ENCODE measurements at regions of chr19 and their contacts with region 1.

Region 1: DNA sequence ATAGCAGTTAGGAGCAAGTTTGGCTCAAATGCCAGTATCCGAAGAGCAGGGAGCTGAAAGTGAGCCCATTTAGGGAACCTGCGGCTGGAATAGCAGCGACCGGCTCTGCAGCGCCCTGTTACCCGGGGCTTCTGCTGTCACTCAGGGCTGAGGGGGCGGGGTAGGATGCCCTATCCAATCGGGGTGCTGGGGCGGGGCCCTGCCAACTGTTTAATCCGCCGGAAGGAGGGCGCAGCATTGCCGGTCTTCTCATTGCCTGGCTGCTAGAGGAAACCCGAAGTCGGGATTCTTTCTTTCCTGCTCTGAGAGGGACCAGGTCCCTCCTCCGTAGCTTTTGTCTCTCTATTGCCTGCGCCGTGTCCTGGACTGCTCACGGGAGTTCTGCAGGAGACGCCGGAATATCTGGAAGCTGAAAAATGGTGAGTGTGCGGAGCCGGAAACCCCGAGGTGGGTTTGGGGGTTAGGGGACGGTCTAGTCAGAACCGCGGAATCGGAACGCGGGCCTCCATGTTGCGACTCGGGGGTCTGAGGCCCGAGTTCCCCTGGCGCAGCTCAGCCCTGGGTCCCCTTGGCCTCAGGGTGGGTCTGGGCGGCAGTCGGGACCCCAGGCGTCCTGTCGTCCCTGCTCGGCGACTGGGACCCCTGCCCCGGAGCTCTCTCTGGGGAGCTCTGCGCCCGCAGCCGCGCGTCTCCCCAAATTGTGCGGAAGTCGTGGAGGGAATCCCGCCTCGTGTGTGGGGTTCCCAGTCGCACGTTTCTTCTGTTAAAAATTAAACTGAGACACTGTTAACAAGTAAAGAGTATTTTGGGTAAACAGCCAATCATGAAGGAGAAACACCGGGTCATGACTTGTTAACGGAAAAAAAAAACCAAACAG is 22.8 kb downstream of the ZNF763 start:
- DNase-seq: peak; percentile 97
- H3K4me3 Mint-ChIP-seq: peak overlapping the region; percentile 92
- H3K27ac Mint-ChIP-seq: peak overlapping the region; percentile 92
- H3K4me1 Mint-ChIP-seq: peaks cover 22% of the 10 kb centered on the region
- H3K27me3 Mint-ChIP-seq: no peaks in the 10 kb centered on the region

Region 2: GRCh38 chr19:11663181-11663591 is 324.5 kb before region 1 on chr19:
- CTCF ChIA-PET with region 1: no interaction called
- intact Hi-C with region 1: no loop called
- DNase-seq: no peak
- H3K4me3 Mint-ChIP-seq: no peak overlapping the region
- H3K27ac Mint-ChIP-seq: no peak overlapping the region
- H3K4me1 Mint-ChIP-seq: no peaks in the 10 kb centered on the region
- H3K27me3 Mint-ChIP-seq: no peaks in the 10 kb centered on the region

Region 3: DNA sequence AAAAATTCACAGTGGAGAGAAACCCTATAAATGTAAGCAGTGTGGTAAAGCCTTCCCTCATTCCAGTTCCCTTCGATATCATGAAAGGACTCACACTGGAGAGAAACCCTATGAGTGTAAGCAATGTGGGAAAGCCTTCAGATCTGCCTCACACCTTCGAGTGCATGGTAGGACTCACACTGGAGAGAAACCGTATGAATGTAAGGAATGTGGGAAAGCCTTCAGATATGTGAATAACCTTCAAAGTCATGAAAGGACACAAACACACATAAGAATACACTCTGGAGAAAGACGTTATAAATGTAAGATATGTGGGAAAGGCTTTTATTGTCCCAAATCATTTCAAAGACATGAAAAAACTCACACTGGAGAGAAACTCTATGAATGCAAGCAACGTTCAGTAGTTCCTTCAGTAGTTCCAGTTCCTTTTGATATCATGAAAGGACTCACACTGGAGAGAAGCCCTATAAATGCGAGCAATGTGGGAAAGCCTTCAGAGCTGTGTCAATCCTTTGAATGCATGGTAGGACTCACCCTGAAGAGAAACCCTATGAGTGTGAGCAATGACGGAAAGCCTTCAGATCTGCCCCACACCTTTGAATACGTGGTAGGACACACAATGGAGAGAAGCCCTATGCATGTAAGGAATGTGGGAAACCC is 155.3 kb before region 1 on chr19:
- CTCF ChIA-PET with region 1: no interaction called
- intact Hi-C with region 1: no loop called
- DNase-seq: no peak
- H3K4me3 Mint-ChIP-seq: no peak overlapping the region
- H3K27ac Mint-ChIP-seq: no peak overlapping the region
- H3K4me1 Mint-ChIP-seq: no peaks in the 10 kb centered on the region
- H3K27me3 Mint-ChIP-seq: no peaks in the 10 kb centered on the region

Region 4: DNA sequence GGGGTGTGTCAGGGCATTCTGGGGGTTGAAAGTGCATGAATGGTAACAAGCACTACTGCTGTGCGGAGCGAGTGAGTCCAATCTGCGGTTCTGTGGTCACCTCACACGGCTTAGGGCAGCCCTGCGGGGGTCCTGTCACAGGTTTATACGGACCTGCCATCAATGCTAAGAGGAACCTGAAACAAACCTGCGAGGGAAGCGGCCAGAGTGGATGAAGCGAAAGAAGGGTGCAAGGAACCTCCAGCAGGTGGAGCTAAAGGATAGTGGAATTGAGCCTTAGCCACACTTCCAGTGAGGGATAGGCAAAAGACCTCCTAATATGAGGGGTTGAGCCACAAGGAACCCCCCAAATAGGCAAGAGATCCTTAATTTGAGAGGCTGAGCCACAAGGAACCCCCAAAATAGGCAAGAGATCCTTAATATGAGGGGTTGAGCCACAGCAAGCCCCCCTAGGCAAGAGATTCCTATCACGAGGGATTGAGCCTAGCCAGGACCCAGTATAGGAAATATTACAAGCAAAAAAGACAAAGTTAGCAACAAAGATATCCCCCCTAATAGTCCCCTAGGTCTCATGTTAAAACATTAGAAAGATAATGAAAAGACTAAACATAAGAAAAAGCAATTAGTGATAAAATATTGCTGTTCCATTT is 106.4 kb before region 1 on chr19:
- CTCF ChIA-PET with region 1: interaction called, 6 read pairs
- intact Hi-C with region 1: loop called (anchors 2 kb)
- DNase-seq: peak; percentile 78
- H3K4me3 Mint-ChIP-seq: no peak overlapping the region
- H3K27ac Mint-ChIP-seq: no peak overlapping the region
- H3K4me1 Mint-ChIP-seq: no peaks in the 10 kb centered on the region
- H3K27me3 Mint-ChIP-seq: no peaks in the 10 kb centered on the region

Region 5: GRCh38 chr19:11971041-11971440 is 16.6 kb before region 1 on chr19:
- CTCF ChIA-PET with region 1: no interaction called
- intact Hi-C with region 1: no loop called
- DNase-seq: no peak
- H3K4me3 Mint-ChIP-seq: no peak overlapping the region
- H3K27ac Mint-ChIP-seq: no peak overlapping the region
- H3K4me1 Mint-ChIP-seq: peaks cover 1% of the 10 kb centered on the region
- H3K27me3 Mint-ChIP-seq: no peaks in the 10 kb centered on the region

Region 6: GRCh38 chr19:12000152-12000981 is 12.7 kb after region 1 on chr19:
- CTCF ChIA-PET with region 1: interaction called, 17 read pairs
- intact Hi-C with region 1: loop called (anchors 1 kb)
- DNase-seq: peak; percentile 70
- H3K4me3 Mint-ChIP-seq: no peak overlapping the region
- H3K27ac Mint-ChIP-seq: peak overlapping the region; percentile 78
- H3K4me1 Mint-ChIP-seq: peaks cover 19% of the 10 kb centered on the region
- H3K27me3 Mint-ChIP-seq: no peaks in the 10 kb centered on the region

Region 7: DNA sequence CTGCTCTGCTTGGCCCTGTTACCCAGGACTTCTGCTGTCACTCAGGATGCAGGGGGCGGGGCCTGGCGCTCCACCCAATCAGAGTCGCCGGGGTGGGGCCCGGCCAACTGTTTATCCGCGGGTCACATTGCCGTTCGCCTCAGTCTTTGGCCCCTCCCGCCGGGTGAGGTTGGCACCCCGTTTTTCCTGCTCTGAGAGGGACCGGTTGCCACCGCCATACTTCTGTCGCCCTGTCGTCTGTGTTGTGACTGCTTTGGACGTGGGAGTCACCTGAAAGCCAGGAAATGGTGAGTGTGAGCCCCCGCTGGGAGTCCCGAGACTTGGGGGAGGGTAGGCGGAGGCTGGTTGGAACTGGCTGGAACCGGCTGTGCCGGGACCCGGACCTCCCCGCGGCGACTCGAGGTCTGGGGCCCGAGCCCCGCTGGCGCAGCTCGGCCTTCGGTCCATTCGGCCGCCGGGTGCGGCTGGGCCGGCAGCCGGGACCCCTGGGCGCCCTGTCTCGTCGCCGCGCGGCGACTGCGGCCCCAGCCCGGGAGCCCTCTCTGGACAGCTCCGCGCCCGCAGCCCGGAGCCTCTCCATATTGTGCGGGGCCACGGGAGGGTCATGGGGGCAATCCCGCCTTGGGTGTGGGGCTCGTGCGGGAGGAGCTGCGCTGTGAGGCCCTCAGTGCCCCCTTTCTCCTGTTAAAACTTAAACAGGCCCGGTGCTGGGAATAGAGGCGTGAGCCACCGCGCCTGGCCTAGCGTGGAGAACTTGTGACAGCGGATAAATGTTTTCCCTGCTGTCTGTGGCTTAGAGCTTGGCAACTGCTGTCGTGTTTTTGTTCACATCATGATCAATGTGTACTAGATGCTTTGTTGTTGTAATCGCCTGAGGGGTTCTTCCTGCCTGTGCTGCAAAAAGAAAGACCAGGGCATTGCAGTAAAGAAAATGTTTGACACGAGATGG is 77.2 kb after region 1 on chr19 and contains the start of gene ZNF844:
- CTCF ChIA-PET with region 1: interaction called, 13 read pairs
- intact Hi-C with region 1: no loop called
- DNase-seq: peak; percentile 85
- H3K4me3 Mint-ChIP-seq: peak within 1 kb of the TSS; percentile 80
- H3K27ac Mint-ChIP-seq: no peak within 1 kb of the TSS
- H3K4me1 Mint-ChIP-seq: peaks cover 6% of the 10 kb centered on the region
- H3K27me3 Mint-ChIP-seq: no peaks in the 10 kb centered on the region
- total RNA-seq, gene ZNF844: 1.6 TPM

Region 8: DNA sequence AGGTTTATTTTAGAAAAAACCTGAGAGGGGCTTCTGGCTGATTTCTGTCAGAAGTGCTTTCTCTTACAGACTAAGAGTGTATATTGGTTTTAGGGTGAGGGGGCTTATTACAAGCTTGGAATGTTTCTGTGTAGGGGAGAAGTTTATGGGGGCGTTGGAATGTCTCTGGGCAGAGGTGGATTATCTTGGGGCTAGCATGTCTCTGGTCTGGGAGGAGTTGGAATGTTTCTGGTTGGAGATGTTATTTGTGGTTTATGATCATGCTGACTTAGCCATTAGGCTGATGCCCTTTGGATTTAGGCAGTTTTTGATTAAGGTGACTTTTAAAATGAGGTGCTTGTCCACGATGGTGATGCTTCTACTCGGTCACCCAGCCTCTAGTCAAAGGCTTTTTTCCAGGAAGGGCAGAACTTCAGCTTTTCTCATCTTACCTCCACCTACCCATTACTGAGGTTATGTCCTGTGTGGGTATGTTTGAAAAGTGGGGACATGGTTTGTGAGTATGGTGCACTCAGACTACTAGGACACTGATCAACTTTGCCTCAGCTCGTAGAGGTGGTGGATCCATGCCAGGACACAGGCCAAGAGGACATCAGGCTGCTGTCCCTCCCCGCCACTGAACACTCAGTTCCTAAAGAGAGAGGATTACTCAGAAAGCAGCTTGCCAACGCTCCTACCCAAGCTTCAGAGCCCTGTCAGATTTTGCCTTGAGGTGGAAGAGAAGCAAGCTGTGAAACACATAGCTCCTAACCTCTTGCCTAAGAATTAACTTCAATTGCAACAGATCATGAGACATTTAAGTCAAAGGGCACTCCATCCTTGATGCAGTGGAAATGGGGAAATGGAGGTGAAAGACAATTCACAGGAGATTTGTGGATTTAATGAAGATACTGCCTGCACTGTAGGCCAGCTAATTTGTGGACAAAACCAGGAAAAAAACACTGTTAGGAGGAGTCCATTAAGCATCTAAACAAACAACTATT is 243.4 kb after region 1 on chr19:
- CTCF ChIA-PET with region 1: no interaction called
- intact Hi-C with region 1: no loop called
- DNase-seq: no peak
- H3K4me3 Mint-ChIP-seq: no peak overlapping the region
- H3K27ac Mint-ChIP-seq: no peak overlapping the region
- H3K4me1 Mint-ChIP-seq: no peaks in the 10 kb centered on the region
- H3K27me3 Mint-ChIP-seq: no peaks in the 10 kb centered on the region

Region 9: GRCh38 chr19:12610540-12611360 is 623.1 kb after region 1 on chr19 and contains the starts of genes ZNF490 and ZNF791:
- CTCF ChIA-PET with region 1: no interaction called
- intact Hi-C with region 1: loop called (anchors 5 kb)
- DNase-seq: peak; percentile 99
- H3K4me3 Mint-ChIP-seq: peak within 1 kb of the TSS; percentile 100
- H3K27ac Mint-ChIP-seq: peak within 1 kb of the TSS; percentile 95
- H3K4me1 Mint-ChIP-seq: peaks cover 43% of the 10 kb centered on the region
- H3K27me3 Mint-ChIP-seq: no peaks in the 10 kb centered on the region
- total RNA-seq, gene ZNF490: 3.9 to 5.0 TPM
- total RNA-seq, gene ZNF791: 11.2 to 11.9 TPM